Ovary (tissue), 10 donors: ENCODE measurements at regions of chr10 and their contacts with region 1.

Region 1: GRCh38 chr10:3785257-3785850 is 345 bp upstream of the KLF6 start:
- DNase-seq: peak; percentile 99 to 100 (median 100)
- H3K4me3 ChIP-seq: peak overlapping the region; percentile 93
- H3K27ac ChIP-seq: peak overlapping the region; percentile 100
- H3K4me1 ChIP-seq: peaks cover 14% of the 10 kb centered on the region
- H3K27me3 ChIP-seq: no peaks in the 10 kb centered on the region
- CTCF ChIP-seq: no peak
- EP300 ChIP-seq: peak; percentile 79
- POLR2A ChIP-seq: peak; percentile 99

Region 2: DNA sequence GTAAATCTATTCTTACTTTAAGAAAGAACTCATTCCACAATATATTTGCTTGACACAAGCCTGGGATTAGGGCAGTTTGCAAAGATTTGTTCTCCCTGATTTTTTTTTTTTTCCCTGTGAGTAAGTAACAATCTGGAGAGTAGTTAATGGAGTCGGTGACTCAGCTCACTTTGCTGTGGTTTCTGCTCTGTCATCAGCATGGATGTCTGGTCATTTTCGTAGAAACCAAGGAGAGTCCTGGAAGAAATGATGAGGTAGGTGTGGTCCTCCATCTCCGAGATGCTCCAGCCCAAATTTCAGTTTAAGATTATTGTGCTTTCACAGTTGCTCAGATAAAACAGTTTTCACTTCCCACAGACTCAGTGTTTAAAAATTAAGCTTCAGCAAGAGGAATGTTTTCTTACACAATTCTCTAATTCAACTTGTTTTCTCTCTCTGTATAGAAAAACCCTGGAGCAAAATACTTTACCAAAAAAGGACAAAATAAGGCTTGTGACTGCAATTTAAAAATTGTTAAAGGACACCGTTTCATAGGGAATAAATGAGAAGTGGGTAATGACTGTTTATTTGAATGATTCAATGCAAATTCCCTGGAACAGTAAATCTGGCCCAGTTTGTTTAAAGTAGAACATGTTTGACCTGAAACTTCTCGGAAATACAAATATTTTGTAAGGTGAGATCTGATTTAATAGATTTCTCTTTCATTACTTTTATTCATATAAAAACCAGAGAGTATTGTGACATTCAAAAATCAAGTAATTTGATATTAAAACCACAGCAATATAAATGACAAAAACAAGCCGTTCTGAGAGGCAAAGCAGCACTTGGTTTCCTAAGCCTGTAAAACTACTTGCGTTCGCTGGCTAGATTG is 536.2 kb before region 1 on chr10:
- intact Hi-C with region 1: no loop called
- DNase-seq: peak in 1 of 5 donors; percentile 37
- H3K4me3 ChIP-seq: no peak overlapping the region
- H3K27ac ChIP-seq: peak overlapping the region in 1 of 2 donors; percentile 8
- H3K4me1 ChIP-seq: no peaks in the 10 kb centered on the region
- H3K27me3 ChIP-seq: no peaks in the 10 kb centered on the region
- CTCF ChIP-seq: no peak
- EP300 ChIP-seq: no peak
- POLR2A ChIP-seq: no peak

Region 3: DNA sequence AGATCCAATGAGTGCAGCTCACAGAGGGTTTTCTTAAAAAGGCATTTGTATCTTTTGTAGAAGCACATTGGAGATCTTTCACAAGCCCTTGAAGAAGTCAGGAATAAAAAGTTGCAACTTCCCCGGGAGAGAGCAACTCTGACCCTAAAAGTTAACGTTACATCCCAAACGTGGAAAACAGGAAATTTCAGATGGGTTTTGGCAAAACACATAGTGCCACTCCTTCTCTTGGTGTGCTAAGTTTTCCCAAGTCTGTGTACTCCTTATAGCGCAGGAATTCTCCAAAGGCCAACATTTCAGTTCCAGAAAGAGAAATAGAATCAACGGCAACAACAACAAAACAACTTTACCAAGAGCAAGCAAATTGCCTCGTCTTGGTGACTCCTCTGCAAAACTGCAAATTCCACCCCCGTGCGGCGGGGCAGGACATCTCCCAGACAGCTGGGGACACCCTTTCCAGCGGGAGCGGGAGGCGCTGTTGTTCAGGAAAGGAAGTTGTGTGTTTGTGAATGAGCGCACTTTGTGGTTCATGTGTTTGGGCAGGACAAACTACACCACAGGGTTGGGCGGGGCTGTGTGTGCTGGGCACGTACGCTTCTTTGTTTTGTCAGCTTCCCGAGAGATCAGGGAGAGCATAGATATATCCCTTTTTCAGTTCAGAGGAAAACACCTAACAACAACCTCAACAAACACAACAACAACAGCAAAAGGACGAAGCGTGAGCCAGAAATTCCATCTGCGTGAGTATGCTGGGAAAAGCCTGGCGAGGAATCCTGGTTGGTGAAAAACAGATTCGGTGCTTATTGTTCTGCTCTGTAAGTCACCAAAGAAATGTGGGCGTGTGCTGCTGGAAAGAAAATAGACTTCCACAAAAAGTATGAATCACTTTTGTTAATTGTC is 318.1 kb before region 1 on chr10:
- intact Hi-C with region 1: loop called in 1 of 4 experiments (anchors 10 kb)
- DNase-seq: peak; percentile 59 to 71 (median 69)
- H3K4me3 ChIP-seq: no peak overlapping the region
- H3K27ac ChIP-seq: peak overlapping the region in 1 of 2 donors; percentile 65
- H3K4me1 ChIP-seq: peaks cover 21% of the 10 kb centered on the region
- H3K27me3 ChIP-seq: no peaks in the 10 kb centered on the region
- CTCF ChIP-seq: peak in 1 of 3 donors; percentile 31
- EP300 ChIP-seq: peak; percentile 49
- POLR2A ChIP-seq: no peak

Region 4: GRCh38 chr10:3935141-3935540 is 149.8 kb after region 1 on chr10:
- intact Hi-C with region 1: loop called in 2 of 4 experiments (anchors 10 kb)
- DNase-seq: peak; percentile 60 to 68 (median 67)
- H3K4me3 ChIP-seq: peak overlapping the region; percentile 32
- H3K27ac ChIP-seq: peak overlapping the region in 1 of 2 donors; percentile 63
- H3K4me1 ChIP-seq: peaks cover 4% of the 10 kb centered on the region
- H3K27me3 ChIP-seq: no peaks in the 10 kb centered on the region
- CTCF ChIP-seq: no peak
- EP300 ChIP-seq: no peak
- POLR2A ChIP-seq: no peak

Region 5: DNA sequence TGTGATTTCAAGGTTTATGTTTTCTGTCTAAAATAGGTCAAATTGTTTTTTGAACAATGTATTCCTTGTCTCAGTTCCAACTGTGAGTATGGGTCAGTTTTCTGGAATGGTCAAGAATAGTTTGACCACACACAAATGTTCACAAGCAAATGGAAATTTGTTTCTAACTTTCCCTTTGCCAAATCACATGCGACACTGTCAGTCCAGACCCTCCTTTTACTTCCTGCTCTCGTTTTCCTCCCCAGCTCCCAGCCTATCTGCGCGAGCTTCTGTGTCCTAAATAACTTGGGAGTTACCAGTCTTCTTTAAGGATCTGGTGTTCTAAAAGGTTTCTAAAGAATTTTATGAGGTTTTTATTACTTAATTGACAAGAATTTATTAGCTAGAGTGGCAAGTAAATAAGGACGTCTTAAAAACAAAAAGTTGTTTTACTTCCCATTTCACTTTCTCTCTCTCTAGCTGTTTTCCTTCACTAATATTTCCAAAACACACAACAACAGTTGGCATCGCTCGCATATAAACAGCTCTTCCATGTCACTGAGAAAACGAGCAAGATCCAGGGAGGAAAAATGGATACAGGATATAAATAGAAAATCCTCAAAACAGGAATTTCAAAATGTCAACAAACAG is 265.8 kb after region 1 on chr10:
- intact Hi-C with region 1: loop called in 2 of 4 experiments (anchors 10 kb)
- DNase-seq: peak in 3 of 5 donors; percentile 45 to 68 (median 62)
- H3K4me3 ChIP-seq: peak overlapping the region; percentile 29
- H3K27ac ChIP-seq: peak overlapping the region; percentile 49 to 73
- H3K4me1 ChIP-seq: peaks cover 7% of the 10 kb centered on the region
- H3K27me3 ChIP-seq: no peaks in the 10 kb centered on the region
- CTCF ChIP-seq: no peak
- EP300 ChIP-seq: no peak
- POLR2A ChIP-seq: no peak

Region 6: GRCh38 chr10:4081685-4082111 is 296.3 kb after region 1 on chr10:
- intact Hi-C with region 1: loop called in 1 of 4 experiments (anchors 10 kb)
- DNase-seq: peak; percentile 31 to 51 (median 36)
- H3K4me3 ChIP-seq: no peak overlapping the region
- H3K27ac ChIP-seq: peak overlapping the region in 1 of 2 donors; percentile 59
- H3K4me1 ChIP-seq: peaks cover 18% of the 10 kb centered on the region
- H3K27me3 ChIP-seq: no peaks in the 10 kb centered on the region
- CTCF ChIP-seq: no peak
- EP300 ChIP-seq: no peak
- POLR2A ChIP-seq: no peak

Region 7: DNA sequence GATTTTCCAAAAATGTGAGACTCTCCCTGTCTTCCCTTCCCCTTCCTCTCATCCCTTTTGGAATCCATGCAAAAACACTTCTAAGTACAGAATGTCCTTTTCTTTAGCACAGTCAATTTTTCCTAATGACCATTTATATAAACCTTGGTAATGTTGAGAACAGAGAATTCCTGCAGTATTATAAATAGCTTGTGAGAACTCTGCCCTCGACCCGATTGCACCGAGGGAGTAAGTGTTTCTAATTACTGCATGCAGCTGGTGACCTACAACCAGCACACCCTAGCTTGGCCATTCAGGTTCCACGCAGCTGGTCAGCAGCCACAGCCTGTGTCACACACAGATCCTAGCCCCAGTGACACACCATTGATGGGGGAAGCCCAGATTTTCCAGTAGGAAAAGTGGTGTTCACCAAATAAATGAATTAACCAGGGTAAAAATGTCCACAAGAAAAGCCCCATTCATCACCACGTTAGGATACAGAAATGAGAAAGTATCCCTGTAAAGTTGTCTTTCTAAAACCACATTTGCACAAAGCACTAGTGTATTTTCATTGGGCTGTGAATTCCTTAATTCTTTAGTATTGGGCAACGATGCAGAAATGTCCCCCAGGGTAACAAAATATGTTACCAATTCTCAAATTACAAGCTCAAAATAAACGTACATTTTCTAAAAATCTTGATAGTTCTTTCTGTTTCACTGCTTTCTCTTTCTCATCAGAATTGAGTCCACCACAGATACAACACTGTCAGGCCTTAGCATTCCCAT is 498.7 kb after region 1 on chr10:
- intact Hi-C with region 1: loop called in 1 of 4 experiments (anchors 10 kb)
- DNase-seq: peak; percentile 31 to 80 (median 70)
- H3K4me3 ChIP-seq: no peak overlapping the region
- H3K27ac ChIP-seq: peak overlapping the region in 1 of 2 donors; percentile 37
- H3K4me1 ChIP-seq: peaks cover 22% of the 10 kb centered on the region
- H3K27me3 ChIP-seq: no peaks in the 10 kb centered on the region
- CTCF ChIP-seq: no peak
- EP300 ChIP-seq: peak; percentile 78
- POLR2A ChIP-seq: no peak

Region 8: DNA sequence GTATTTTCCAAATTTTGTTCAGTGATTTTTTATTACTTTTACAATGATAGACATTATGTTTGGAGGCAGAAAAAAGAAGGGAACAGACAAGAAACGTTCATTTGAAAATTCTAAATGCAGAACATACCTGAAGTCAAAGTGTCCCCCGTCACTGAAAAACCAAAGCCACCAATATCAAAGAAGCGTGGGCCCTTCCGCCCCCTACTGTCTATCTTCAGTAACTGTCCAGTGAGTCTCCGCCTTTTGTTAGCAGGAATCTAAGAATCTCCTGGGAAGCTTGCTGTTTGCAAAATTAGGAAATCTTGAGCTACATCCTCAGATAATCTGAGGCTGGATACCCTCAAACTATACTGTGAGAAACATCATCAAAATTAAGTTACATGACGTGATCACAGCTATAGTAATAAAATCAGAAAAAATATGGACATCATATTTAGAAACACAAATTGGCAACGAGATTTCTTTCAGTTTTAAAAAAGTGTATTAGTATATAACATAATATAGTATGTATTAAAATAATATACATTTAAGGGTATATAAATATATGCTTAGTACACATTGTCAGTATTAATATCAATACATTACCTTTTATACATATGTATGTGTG is 871.3 kb after region 1 on chr10:
- intact Hi-C with region 1: loop called in 2 of 4 experiments (anchors 5 to 10 kb)
- DNase-seq: peak; percentile 26 to 56 (median 39)
- H3K4me3 ChIP-seq: no peak overlapping the region
- H3K27ac ChIP-seq: no peak overlapping the region
- H3K4me1 ChIP-seq: peaks cover 1% of the 10 kb centered on the region
- H3K27me3 ChIP-seq: no peaks in the 10 kb centered on the region
- CTCF ChIP-seq: peak; percentile 70 to 80 (median 79)
- EP300 ChIP-seq: no peak
- POLR2A ChIP-seq: no peak